ENCODE measurements at regions of chr20 and their contacts with region 1.

Region 1: DNA sequence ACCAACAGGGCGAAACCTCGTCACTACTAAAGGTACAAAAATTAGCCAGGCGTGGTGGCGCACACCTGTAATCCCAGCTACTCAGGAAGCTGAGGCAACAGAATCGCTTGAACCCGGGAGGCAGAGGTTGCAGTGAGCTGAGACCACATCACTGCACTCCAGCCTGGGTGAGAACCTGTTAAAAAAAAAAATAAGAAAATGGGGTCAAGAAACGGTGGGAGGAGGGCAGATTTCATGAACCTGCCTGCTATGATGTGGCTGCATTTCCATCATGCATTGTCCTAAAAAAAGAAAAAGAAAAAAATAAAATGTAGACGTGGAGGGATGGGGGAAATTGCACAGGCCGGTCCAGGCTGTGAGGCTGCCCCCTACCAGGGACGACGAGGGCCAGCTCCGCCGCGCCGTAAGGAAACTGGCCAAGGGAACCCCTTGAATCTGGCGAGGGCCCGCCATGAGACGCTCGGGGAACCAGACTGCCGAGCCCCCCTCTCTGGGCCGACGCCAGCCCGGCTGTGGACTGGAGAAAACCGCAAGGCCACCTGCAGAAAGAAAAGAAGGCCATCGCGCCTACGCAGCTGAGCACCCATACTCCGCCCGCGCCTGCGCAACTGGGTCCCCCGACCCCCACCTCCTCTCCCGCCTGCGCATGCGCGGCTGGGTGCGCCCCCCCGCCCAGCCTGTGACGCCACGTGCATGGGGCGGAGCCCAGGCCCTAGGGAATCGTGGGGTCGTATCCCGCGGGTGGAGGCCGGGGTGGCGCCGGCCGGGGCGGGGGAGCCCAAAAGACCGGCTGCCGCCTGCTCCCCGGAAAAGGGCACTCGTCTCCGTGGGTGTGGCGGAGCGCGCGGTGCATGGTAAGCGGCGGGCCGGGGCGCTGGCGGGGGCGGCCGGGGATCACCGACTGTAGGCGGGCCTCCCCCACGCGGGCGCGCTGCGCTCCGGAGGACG is at the start of gene ENTPD6:
- DNase-seq: peak; percentile 88 to 91
- H3K4me3 ChIP-seq: peak within 1 kb of the TSS; percentile 71 to 94 (median 93)
- H3K27ac ChIP-seq: peak within 1 kb of the TSS; percentile 87 to 91
- H3K4me1 ChIP-seq: peaks cover 0 to 9% of the 10 kb centered on the region in 2 donors
- H3K27me3 ChIP-seq: no peaks in the 10 kb centered on the region
- CTCF ChIP-seq: no peak
- POLR2A ChIP-seq: peak; percentile 70
- total RNA-seq, gene ENTPD6: 45.8 to 77.6 (median 71.1) TPM

Region 2: GRCh38 chr20:25065625-25066338 is 129.5 kb before region 1 on chr20:
- intact Hi-C with region 1: loop called (anchors 10 kb)
- DNase-seq: peak in 1 of 2 donors; percentile 58
- H3K4me3 ChIP-seq: no peak overlapping the region
- H3K27ac ChIP-seq: no peak overlapping the region
- H3K4me1 ChIP-seq: no peaks in the 10 kb centered on the region
- H3K27me3 ChIP-seq: peaks cover 0 to 13% of the 10 kb centered on the region in 2 donors
- CTCF ChIP-seq: peak; percentile 71 to 90 (median 89)
- POLR2A ChIP-seq: no peak

Measured in breast epithelium (tissue), 4 donors.